ENCODE measurements at regions of chr16 and their contacts with region 1.

Region 1: DNA sequence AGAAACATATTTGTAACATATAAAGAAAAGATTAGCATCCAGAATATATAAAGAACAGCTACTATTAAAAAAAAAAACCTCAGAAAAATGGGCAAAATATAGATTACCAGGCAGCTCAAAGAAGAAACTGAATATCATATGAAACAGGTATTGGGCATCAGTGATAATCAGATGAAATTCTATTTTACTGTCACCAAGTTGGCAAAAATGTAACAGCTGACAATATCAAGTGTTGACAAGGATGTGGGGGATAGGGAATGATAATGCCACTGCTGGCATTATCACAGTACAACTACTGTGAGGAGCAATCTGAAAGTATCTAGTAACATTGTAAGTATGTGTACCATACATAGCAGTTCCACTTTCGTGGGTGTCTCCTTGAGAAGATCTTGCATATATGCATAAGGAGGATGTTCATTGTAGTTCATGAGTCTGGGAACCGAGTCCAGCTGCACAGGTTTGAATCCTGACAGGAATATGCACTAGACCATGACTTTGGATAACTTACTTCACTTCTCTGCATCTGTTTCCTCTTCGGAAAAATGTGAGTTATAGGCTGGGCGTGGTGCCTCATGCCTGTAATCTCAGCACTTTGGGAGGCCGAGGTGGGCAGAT is 50.3 kb downstream of the LCMT1 start:
- DNase-seq: no peak
- H3K4me3 ChIP-seq: no peak overlapping the region
- H3K27ac ChIP-seq: no peak overlapping the region
- H3K4me1 ChIP-seq: no peaks in the 10 kb centered on the region
- H3K27me3 ChIP-seq: no peaks in the 10 kb centered on the region
- CTCF ChIP-seq: no peak
- POLR2A ChIP-seq: no peak

Region 2: GRCh38 chr16:25100511-25100910 is 61.3 kb before region 1 on chr16:
- CTCF ChIA-PET with region 1: no interaction called
- POLR2A ChIA-PET with region 1: no interaction called
- dilution Hi-C with region 1: no loop called
- intact Hi-C with region 1: no loop called
- DNase-seq: no peak
- H3K4me3 ChIP-seq: no peak overlapping the region
- H3K27ac ChIP-seq: no peak overlapping the region
- H3K4me1 ChIP-seq: no peaks in the 10 kb centered on the region
- H3K27me3 ChIP-seq: peaks cover 6% of the 10 kb centered on the region in 2 experiments
- CTCF ChIP-seq: no peak
- POLR2A ChIP-seq: no peak

Region 3: DNA sequence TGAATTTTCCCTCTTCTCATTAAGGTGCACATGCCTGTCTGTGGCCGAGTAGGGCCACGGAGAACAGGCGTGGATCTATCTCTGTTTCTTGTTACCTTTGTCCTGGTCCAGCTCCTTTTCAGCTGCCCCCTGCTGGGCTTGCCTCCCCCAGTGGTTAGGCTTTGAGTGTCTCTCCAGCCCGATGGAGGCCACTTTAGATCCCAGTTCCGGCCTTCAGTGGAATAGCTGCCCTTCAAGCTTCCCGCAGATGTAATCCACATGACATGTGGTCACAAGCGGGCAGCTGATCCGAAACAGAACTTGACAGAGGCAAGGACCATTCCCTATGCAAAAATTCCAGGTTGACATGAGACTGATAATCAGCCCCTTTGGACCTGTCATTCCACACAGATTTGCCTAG is 14.2 kb after region 1 on chr16:
- CTCF ChIA-PET with region 1: interaction called, 10 read pairs
- POLR2A ChIA-PET with region 1: no interaction called
- dilution Hi-C with region 1: no loop called
- intact Hi-C with region 1: no loop called
- DNase-seq: no peak
- H3K4me3 ChIP-seq: no peak overlapping the region
- H3K27ac ChIP-seq: no peak overlapping the region
- H3K4me1 ChIP-seq: no peaks in the 10 kb centered on the region
- H3K27me3 ChIP-seq: no peaks in the 10 kb centered on the region
- CTCF ChIP-seq: no peak
- POLR2A ChIP-seq: no peak

Region 4: DNA sequence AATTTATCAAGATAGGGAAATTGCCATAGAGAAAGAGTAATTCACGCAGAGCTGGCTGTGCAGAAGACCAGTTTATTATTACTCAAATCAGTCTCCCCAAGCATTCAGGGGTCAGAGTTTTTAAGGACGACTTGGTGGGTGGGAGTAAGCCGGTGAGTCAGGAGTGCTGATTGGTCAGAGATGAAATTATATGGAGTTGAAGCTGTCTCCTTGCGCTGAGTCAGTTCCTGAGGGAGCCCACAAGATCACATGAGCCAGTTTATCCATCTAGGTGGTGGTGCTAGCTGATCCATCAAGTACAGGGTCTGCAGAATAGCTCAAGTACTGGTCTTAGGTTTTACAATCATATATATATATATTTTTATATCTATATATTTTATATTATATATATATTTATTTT is 48.9 kb after region 1 on chr16:
- CTCF ChIA-PET with region 1: no interaction called
- POLR2A ChIA-PET with region 1: no interaction called
- dilution Hi-C with region 1: no loop called
- intact Hi-C with region 1: loop called (anchors 10 kb)
- DNase-seq: no peak
- H3K4me3 ChIP-seq: no peak overlapping the region
- H3K27ac ChIP-seq: no peak overlapping the region
- H3K4me1 ChIP-seq: no peaks in the 10 kb centered on the region
- H3K27me3 ChIP-seq: peaks cover 0 to 1% of the 10 kb centered on the region in 2 experiments
- CTCF ChIP-seq: no peak
- POLR2A ChIP-seq: no peak

Measured in endothelial cell of umbilical vein (primary cell).